Activated CD4-positive, alpha-beta T cell treated with anti-CD3 and anti-CD28 coated beads for 36 hours (primary cell): ENCODE measurements at regions of chr7 and their contacts with region 1.

Region 1: GRCh38 chr7:35037526-35038339 is 448 bp upstream of the DPY19L1 start:
- DNase-seq: peak; percentile 93
- ATAC-seq: peak; percentile 82
- H3K4me3 Mint-ChIP-seq: peak overlapping the region; percentile 77
- H3K27ac Mint-ChIP-seq: peak overlapping the region; percentile 89
- H3K4me1 Mint-ChIP-seq: peaks cover 25% of the 10 kb centered on the region
- H3K27me3 Mint-ChIP-seq: no peaks in the 10 kb centered on the region

Region 2: DNA sequence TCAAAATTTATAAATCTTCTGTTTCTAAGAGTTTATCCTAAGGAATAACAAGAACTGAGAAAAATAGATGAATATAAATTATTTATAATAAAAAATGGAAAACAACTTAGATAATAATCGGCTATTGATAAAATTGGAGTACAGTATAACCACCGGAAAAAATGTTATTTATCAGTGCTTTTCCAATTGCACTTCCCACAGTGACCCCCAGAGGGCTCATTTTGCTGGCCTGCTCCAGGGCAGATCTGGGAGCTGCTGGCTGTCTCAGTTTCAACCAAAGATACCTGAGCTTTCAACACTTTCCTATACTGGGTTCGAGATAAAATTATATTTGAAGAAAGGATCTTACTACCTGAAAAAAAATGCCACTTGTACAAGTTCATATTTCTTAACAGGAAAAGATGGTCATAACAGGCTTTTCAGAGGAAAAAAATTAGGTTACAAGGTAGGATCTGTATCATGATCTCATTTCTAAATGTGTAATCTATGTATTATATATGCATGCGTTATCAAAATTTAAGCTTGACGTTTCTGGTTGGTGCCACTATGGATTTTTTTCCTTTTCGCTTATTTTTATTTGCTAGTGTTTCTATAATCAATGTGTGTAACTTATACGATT is 214.0 kb before region 1 on chr7:
- CTCF ChIA-PET with region 1: no interaction called
- POLR2A ChIA-PET with region 1: no interaction called
- intact Hi-C with region 1: loop called (anchors 1 to 2 kb)
- DNase-seq: peak; percentile 75
- ATAC-seq: peak; percentile 65
- H3K4me3 Mint-ChIP-seq: no peak overlapping the region
- H3K27ac Mint-ChIP-seq: no peak overlapping the region
- H3K4me1 Mint-ChIP-seq: no peaks in the 10 kb centered on the region
- H3K27me3 Mint-ChIP-seq: no peaks in the 10 kb centered on the region

Region 3: DNA sequence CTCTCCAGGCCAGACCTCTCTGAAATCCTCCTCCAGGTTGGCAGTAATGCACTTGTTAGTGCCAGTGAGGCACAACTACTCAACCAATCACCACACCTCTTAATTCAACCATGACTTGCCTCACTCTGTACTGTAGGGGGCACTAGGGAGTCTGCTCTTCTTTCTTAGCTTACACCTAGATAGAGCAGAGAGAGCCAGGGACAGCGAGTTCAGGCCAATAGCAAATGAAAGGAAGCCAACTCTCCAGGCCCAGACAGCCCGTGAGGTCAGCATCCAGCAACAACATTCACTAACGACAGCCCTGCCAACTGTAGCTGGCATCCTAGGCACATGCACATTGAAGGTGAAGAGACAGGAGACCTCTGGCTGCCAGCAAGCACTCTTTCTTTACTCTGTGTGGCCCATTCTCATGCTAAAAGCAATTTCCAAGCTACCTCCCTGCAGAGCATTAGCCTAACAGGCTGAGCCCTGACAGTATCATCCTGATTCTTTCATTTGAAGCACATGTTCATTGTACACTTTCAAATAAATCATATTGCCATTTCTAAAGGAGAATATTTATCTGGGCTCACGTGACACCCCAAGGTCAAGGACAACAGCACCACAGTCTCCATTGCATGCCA is 136.7 kb before region 1 on chr7:
- CTCF ChIA-PET with region 1: interaction called, 4 read pairs
- POLR2A ChIA-PET with region 1: no interaction called
- intact Hi-C with region 1: loop called in 1 of 2 experiments (anchors 5 kb)
- DNase-seq: peak; percentile 9
- ATAC-seq: peak; percentile 75
- H3K4me3 Mint-ChIP-seq: no peak overlapping the region
- H3K27ac Mint-ChIP-seq: no peak overlapping the region
- H3K4me1 Mint-ChIP-seq: no peaks in the 10 kb centered on the region
- H3K27me3 Mint-ChIP-seq: peaks cover 12% of the 10 kb centered on the region

Region 4: DNA sequence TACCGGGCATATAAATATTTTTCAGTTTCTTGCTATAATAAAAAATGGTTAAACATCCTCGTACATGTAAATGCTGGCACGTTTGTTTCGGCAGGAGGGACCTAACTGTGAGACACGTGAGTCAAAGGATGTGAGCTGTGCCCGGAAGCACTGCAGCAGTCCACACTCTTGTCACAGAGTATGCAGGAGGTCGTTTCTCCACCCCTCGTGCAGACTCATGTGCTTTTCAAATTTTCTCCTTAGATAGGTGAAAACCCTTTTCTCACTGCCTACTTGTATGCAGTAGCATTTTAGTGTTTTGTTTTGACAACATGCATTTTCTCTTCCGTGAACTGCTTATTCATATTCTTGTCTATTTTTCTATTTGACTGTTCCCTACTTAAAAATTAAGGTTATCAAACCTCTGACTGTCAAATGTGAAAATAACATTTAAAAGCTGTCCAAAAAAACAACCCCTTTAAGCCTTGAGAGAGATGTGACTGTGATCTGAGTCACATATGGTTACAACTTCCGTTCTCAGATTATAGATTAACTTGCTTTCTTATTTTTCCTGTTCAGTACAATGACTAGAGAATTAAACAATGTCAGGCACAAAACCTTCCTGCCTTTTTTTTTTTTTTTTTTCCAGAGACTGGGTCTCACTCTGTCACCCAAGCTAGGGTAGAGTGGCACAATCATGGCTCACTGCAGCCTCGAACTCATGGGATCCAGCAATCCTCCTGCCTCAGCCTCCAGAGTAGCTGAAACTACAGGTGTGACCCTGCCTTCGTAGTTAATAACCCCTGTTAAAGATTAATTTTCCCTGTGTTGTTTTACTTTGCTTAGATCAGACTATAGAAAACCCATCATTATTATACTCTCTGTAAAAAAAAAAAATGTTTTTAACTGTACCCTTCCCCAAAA is 45.5 kb before region 1 on chr7:
- CTCF ChIA-PET with region 1: no interaction called
- POLR2A ChIA-PET with region 1: no interaction called
- intact Hi-C with region 1: loop called (anchors 1 kb)
- DNase-seq: peak; percentile 69
- ATAC-seq: peak; percentile 95
- H3K4me3 Mint-ChIP-seq: no peak overlapping the region
- H3K27ac Mint-ChIP-seq: peak overlapping the region; percentile 66
- H3K4me1 Mint-ChIP-seq: peaks cover 22% of the 10 kb centered on the region
- H3K27me3 Mint-ChIP-seq: no peaks in the 10 kb centered on the region